Prostate gland (tissue), 2 donors: ENCODE measurements at regions of chr19 and their contacts with region 1.

Region 1: DNA sequence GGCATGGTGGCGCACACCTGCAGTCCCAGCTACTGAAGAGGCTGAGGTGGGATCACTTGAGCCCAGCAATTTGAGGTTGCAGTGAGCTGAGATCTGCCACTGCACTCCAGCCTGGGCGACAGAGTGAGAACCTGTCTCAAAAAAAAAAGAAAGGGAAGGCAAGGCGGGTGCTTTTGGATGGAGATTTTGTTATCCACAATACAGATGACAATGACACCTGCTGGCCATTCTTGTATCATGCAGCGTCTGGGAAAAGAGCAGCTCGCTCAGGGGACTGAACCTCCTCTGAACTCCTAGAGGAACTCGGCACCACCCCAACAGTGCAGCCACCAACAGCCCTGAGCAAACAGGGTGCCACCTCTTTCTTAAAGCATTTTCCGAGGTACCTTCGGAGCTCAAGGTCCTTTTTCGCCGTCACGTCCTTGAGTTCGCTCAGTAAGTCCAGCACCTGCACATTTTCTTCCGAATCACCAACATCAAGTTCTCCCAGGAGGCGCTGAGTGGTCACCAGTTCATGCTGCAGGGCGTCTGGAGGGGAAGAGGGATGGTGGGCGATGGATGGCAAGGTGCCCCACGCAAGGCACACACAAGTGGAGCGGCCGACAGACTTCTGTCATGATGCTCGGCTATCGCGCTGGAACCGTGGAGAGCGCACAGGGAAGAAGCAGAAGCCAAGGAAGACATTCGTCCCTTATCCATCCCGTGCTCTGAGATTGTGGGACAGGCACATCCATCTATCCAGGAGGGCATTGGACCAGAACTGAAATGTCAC is 22.6 kb downstream of the HAUS8 start:
- DNase-seq: peak; percentile 76
- H3K4me3 ChIP-seq: no peak overlapping the region
- H3K27ac ChIP-seq: no peak overlapping the region
- H3K4me1 ChIP-seq: peaks cover 6% of the 10 kb centered on the region
- H3K27me3 ChIP-seq: no peaks in the 10 kb centered on the region
- CTCF ChIP-seq: peak; percentile 53 to 84 (median 74)
- POLR2A ChIP-seq: no peak

Region 2: GRCh38 chr19:16714702-16715287 is 337.8 kb before region 1 on chr19:
- intact Hi-C with region 1: loop called (anchors 10 kb)
- DNase-seq: peak; percentile 46
- H3K4me3 ChIP-seq: no peak overlapping the region
- H3K27ac ChIP-seq: no peak overlapping the region
- H3K4me1 ChIP-seq: no peaks in the 10 kb centered on the region
- H3K27me3 ChIP-seq: no peaks in the 10 kb centered on the region
- CTCF ChIP-seq: peak; percentile 79 to 92 (median 86)
- POLR2A ChIP-seq: no peak

Region 3: DNA sequence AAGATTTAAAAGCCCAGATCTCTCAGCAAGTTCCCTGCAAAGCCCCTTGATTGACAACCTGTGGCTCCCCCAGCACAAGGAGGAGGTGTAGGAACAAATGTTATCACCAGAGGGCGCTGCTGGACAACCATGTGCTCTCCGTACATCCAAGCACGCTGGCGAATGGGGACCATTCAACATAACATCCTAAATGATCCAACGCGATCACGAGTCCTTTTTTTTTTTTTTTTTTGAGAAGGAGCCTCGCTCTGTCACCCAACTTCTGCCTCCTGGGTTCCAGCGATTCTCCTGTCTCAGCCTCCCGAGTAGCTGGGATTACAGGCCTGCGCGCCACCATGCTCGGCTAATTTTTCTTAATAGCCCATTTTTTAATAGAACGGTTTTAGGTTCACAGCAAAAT is 281.0 kb before region 1 on chr19:
- intact Hi-C with region 1: loop called (anchors 2 kb)
- DNase-seq: peak; percentile 76
- H3K4me3 ChIP-seq: no peak overlapping the region
- H3K27ac ChIP-seq: no peak overlapping the region
- H3K4me1 ChIP-seq: no peaks in the 10 kb centered on the region
- H3K27me3 ChIP-seq: no peaks in the 10 kb centered on the region
- CTCF ChIP-seq: peak; percentile 50 to 84 (median 75)
- POLR2A ChIP-seq: no peak

Region 4: GRCh38 chr19:16836115-16837034 is 216.2 kb before region 1 on chr19:
- intact Hi-C with region 1: loop called (anchors 5 kb)
- DNase-seq: peak; percentile 30
- H3K4me3 ChIP-seq: no peak overlapping the region
- H3K27ac ChIP-seq: no peak overlapping the region
- H3K4me1 ChIP-seq: no peaks in the 10 kb centered on the region
- H3K27me3 ChIP-seq: no peaks in the 10 kb centered on the region
- CTCF ChIP-seq: peak in 2 of 4 experiments; percentile 19 to 35
- POLR2A ChIP-seq: no peak

Region 5: GRCh38 chr19:17125715-17126677 is 73.4 kb after region 1 on chr19:
- intact Hi-C with region 1: no loop called
- DNase-seq: no peak
- H3K4me3 ChIP-seq: no peak overlapping the region
- H3K27ac ChIP-seq: peak overlapping the region in 1 of 2 donors; percentile 23
- H3K4me1 ChIP-seq: no peaks in the 10 kb centered on the region
- H3K27me3 ChIP-seq: no peaks in the 10 kb centered on the region
- CTCF ChIP-seq: no peak
- POLR2A ChIP-seq: no peak